PC-9 (cell line): ENCODE measurements at regions of chr4 and their contacts with region 1.

Region 1: GRCh38 chr4:168153596-168154440 is 61.5 kb downstream of the ANXA10 start:
- DNase-seq: peak; percentile 37 to 54
- H3K4me3 ChIP-seq: peak overlapping the region; percentile 48; the same call in 1 of the 2 replicates
- H3K27ac ChIP-seq: no peak overlapping the region
- H3K4me1 ChIP-seq: no peaks in the 10 kb centered on the region
- H3K27me3 ChIP-seq: no peaks in the 10 kb centered on the region
- CTCF ChIP-seq: peak; percentile 78

Region 2: DNA sequence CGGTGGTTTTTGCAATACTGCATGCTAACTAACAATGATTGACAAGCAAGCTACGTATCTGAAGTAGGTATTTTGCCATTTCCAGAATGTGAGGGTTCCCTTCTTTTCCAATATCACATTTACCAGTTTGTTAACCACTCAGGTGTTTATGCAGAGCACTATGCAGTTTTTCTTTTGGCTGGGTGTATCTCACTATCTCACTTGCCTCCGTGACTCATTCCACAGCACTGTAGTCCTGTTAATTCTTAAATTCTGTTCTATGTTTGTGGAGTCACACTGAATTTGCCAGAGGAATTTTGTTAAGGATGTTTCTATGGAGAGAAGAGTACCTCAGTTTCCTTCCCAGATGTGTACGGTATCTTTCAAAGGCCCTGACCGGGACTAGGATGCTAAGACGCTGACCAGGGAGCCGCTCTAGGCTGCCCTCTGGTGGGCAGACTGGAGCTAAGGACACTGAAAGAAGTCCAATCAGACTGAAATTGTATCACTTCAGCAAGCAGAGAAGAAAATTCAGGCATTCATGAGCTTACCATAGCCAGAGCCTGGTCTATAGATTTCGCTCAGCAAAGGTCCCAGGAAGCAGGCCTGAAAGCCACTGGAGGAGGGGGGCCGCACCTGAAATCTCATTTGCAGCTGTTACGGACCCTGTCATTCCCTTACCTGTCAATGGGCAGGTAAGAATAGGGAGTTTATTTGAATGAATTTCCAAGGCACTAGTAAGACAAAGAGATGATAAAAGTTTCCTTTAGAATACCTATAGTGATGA is 531.2 kb before region 1 on chr4:
- CTCF ChIA-PET with region 1: no interaction called
- POLR2A ChIA-PET with region 1: interaction called, 3 read pairs
- intact Hi-C with region 1: loop called (anchors 5 kb)
- DNase-seq: peak in 1 of 2 experiments; percentile 40
- H3K4me3 ChIP-seq: no peak overlapping the region
- H3K27ac ChIP-seq: no peak overlapping the region
- H3K4me1 ChIP-seq: no peaks in the 10 kb centered on the region
- H3K27me3 ChIP-seq: no peaks in the 10 kb centered on the region
- CTCF ChIP-seq: peak; percentile 72